ENCODE measurements at regions of chr17 and their contacts with region 1.

Region 1: GRCh38 chr17:64506576-64507477 is at the start of gene CEP95:
- DNase-seq: peak; percentile 96
- total RNA-seq, gene CEP95: 16.4 TPM

Region 2: GRCh38 chr17:63842540-63843386 is 664.1 kb before region 1 on chr17 and contains the start of gene SMARCD2:
- intact Hi-C with region 1: loop called (anchors 10 kb)
- DNase-seq: peak; percentile 100
- total RNA-seq, gene SMARCD2: 18.8 TPM

Region 3: GRCh38 chr17:64091116-64091515 is 415.7 kb before region 1 on chr17:
- intact Hi-C with region 1: no loop called
- DNase-seq: no peak

Region 4: GRCh38 chr17:64455993-64456885 is 50.6 kb before region 1 on chr17:
- intact Hi-C with region 1: no loop called
- DNase-seq: no peak

Region 5: GRCh38 chr17:64547319-64547718 is 40.5 kb after region 1 on chr17:
- intact Hi-C with region 1: no loop called
- DNase-seq: no peak

Region 6: GRCh38 chr17:64661976-64662773 is 155.3 kb after region 1 on chr17 and contains the start of gene SMURF2:
- intact Hi-C with region 1: loop called (anchors 5 kb)
- DNase-seq: peak; percentile 94
- total RNA-seq, gene SMURF2: 17.4 TPM